Mammary epithelial cell (primary cell): ENCODE measurements at regions of chr2 and their contacts with region 1.

Region 1: DNA sequence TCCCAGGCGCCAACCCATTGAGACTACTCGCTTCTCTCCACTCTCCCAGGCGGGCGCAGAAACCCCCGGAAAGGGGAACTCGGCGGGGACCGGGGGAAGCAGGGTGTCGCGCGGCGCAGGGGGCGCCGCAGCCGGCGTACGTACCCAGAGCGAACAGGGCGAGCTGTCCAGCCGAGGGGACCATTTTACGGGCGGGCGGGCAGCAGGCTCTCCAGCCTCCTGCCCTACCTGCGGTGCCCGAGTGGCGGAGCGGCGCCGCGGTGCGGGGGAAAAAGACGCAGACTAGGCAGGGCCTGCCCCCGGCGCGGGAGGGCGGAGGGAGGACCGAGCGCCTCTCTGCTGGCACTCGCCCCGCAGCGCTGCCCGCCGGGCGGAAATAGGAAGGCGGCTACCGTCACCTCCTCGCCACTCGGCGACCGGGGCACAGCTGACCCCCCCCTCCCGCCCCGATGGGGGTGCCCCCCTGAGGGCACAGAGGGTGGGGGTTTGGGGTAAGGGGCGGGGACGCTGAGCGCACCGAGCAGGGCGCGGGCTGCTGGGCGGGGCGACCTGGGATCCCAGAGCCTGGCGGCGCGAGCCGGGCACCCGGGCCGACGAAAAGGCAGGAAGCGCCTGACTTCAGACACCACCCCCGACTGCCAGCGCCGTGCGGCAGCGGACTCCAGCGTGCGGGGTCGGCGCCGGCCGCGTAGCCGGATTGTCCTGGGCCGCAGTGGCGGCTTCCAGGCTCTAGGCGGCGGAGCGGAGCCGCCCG is at the start of gene TGFA:
- DNase-seq: peak; percentile 96
- H3K4me3 ChIP-seq: peak within 1 kb of the TSS; percentile 55 to 98 (median 85)
- H3K27ac ChIP-seq: peak within 1 kb of the TSS; percentile 94
- H3K4me1 ChIP-seq: peaks cover 27% of the 10 kb centered on the region
- H3K27me3 ChIP-seq: no peaks in the 10 kb centered on the region
- CTCF ChIP-seq: peak; percentile 71 to 95
- total RNA-seq, gene TGFA: 59.2 to 126 TPM

Region 2: GRCh38 chr2:69667805-69668382 is 885.9 kb before region 1 on chr2:
- CTCF ChIA-PET with region 1: no interaction called
- dilution Hi-C with region 1: no loop called
- in situ Hi-C with region 1: no loop called
- intact Hi-C with region 1: no loop called
- DNase-seq: peak; percentile 85
- H3K4me3 ChIP-seq: no peak overlapping the region
- H3K27ac ChIP-seq: peak overlapping the region; percentile 62
- H3K4me1 ChIP-seq: peaks cover 17% of the 10 kb centered on the region
- H3K27me3 ChIP-seq: no peaks in the 10 kb centered on the region
- CTCF ChIP-seq: no peak

Region 3: GRCh38 chr2:70340921-70341765 is 212.6 kb before region 1 on chr2:
- CTCF ChIA-PET with region 1: interaction called, 5 read pairs
- dilution Hi-C with region 1: no loop called
- in situ Hi-C with region 1: loop called in 1 of 2 experiments (anchors 5 kb)
- intact Hi-C with region 1: loop called (anchors 1 kb)
- DNase-seq: peak; percentile 57
- H3K4me3 ChIP-seq: no peak overlapping the region
- H3K27ac ChIP-seq: peak overlapping the region; percentile 2
- H3K4me1 ChIP-seq: peaks cover 33% of the 10 kb centered on the region
- H3K27me3 ChIP-seq: no peaks in the 10 kb centered on the region
- CTCF ChIP-seq: peak; percentile 87 to 89

Region 4: GRCh38 chr2:70460333-70460732 is 93.4 kb before region 1 on chr2:
- CTCF ChIA-PET with region 1: no interaction called
- dilution Hi-C with region 1: no loop called
- in situ Hi-C with region 1: no loop called
- intact Hi-C with region 1: loop called (anchors 5 kb)
- DNase-seq: peak; percentile 24
- H3K4me3 ChIP-seq: no peak overlapping the region
- H3K27ac ChIP-seq: no peak overlapping the region
- H3K4me1 ChIP-seq: peaks cover 6% of the 10 kb centered on the region
- H3K27me3 ChIP-seq: no peaks in the 10 kb centered on the region
- CTCF ChIP-seq: peak; percentile 51 to 58

Region 5: GRCh38 chr2:70498054-70498453 is 55.7 kb before region 1 on chr2:
- CTCF ChIA-PET with region 1: no interaction called
- dilution Hi-C with region 1: no loop called
- in situ Hi-C with region 1: loop called in 1 of 2 experiments (anchors 10 kb)
- intact Hi-C with region 1: loop called (anchors 2 kb)
- DNase-seq: no peak
- H3K4me3 ChIP-seq: no peak overlapping the region
- H3K27ac ChIP-seq: no peak overlapping the region
- H3K4me1 ChIP-seq: peaks cover 14% of the 10 kb centered on the region
- H3K27me3 ChIP-seq: no peaks in the 10 kb centered on the region
- CTCF ChIP-seq: peak; percentile 32 to 48

Region 6: GRCh38 chr2:70523996-70524965 is 29.5 kb before region 1 on chr2:
- CTCF ChIA-PET with region 1: no interaction called
- dilution Hi-C with region 1: no loop called
- in situ Hi-C with region 1: no loop called
- intact Hi-C with region 1: loop called (anchors 1 kb)
- DNase-seq: peak; percentile 99
- H3K4me3 ChIP-seq: peak overlapping the region in 1 of 3 experiments; percentile 5
- H3K27ac ChIP-seq: peak overlapping the region; percentile 97
- H3K4me1 ChIP-seq: peaks cover 62% of the 10 kb centered on the region
- H3K27me3 ChIP-seq: no peaks in the 10 kb centered on the region
- CTCF ChIP-seq: no peak

Region 7: DNA sequence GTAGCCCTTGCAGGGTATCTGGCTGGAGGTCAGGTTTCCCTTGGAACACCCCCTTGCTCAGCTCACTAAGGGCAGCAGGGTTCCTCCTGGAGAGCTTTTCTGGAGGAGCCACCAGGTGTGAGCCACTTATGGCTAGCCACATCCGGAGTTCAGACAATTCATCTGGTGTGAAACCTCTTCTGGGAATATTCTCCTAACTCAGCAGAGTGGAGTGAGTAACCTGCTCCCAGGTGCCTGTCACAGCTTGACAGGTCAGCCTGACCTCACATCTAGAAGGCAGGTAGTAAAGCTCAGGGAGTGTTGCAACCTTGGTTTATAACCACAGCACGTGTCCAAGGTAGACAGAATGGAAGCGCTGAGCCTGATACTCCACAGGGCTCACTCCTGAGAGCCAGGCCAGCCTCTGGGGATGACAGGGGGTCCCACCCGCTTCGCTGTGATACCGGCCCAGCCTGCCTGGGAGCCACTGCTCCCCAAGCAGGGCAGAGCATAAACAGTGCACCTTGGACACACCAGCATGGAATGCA is 62.5 kb after region 1 on chr2:
- CTCF ChIA-PET with region 1: interaction called, 4 read pairs
- dilution Hi-C with region 1: no loop called
- in situ Hi-C with region 1: loop called in 1 of 2 experiments (anchors 5 kb)
- intact Hi-C with region 1: loop called (anchors 1 kb)
- DNase-seq: peak; percentile 99
- H3K4me3 ChIP-seq: no peak overlapping the region
- H3K27ac ChIP-seq: peak overlapping the region; percentile 46
- H3K4me1 ChIP-seq: peaks cover 25% of the 10 kb centered on the region
- H3K27me3 ChIP-seq: no peaks in the 10 kb centered on the region
- CTCF ChIP-seq: no peak

Region 8: DNA sequence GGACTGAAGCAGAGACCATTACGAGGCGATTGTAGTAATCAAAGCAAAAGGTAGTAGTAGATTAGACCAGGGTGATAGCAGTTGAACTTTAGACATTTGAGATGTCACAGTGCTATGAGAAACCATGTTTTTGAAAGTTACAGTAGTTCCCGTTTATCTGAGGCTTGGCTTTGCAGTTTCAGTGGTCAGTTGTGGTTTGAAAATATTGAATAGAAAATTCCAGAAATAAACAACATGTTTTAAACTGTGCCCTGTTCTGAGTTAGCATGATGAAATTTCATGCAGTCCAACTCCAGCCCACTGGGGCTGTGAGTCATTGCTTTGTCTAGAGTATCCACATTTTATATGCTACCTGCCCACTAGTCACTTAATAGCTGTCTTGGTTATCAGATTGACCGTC is 825.3 kb after region 1 on chr2:
- CTCF ChIA-PET with region 1: no interaction called
- dilution Hi-C with region 1: no loop called
- in situ Hi-C with region 1: no loop called
- intact Hi-C with region 1: no loop called
- DNase-seq: peak; percentile 76
- H3K4me3 ChIP-seq: no peak overlapping the region
- H3K27ac ChIP-seq: peak overlapping the region; percentile 56
- H3K4me1 ChIP-seq: peaks cover 9% of the 10 kb centered on the region
- H3K27me3 ChIP-seq: no peaks in the 10 kb centered on the region
- CTCF ChIP-seq: no peak